CD4-positive, alpha-beta T cell (primary cell): ENCODE measurements at regions of chr4 and their contacts with region 1.

Region 1: GRCh38 chr4:163624727-163625126 is 130.2 kb downstream of the TMA16 start:
- DNase-seq: peak in 3 of 14 experiments; percentile 13 to 38 (median 14)
- ATAC-seq: peak; percentile 54
- H3K4me3 ChIP-seq: no peak overlapping the region
- H3K4me3 Mint-ChIP-seq: peak overlapping the region; percentile 69
- H3K27ac ChIP-seq: no peak overlapping the region
- H3K27ac Mint-ChIP-seq: peak overlapping the region; percentile 19
- H3K4me1 ChIP-seq: peaks cover 17% of the 10 kb centered on the region
- H3K4me1 Mint-ChIP-seq: peaks cover 48% of the 10 kb centered on the region
- H3K27me3 ChIP-seq: no peaks in the 10 kb centered on the region
- H3K27me3 Mint-ChIP-seq: no peaks in the 10 kb centered on the region
- CTCF ChIP-seq: no peak

Region 2: DNA sequence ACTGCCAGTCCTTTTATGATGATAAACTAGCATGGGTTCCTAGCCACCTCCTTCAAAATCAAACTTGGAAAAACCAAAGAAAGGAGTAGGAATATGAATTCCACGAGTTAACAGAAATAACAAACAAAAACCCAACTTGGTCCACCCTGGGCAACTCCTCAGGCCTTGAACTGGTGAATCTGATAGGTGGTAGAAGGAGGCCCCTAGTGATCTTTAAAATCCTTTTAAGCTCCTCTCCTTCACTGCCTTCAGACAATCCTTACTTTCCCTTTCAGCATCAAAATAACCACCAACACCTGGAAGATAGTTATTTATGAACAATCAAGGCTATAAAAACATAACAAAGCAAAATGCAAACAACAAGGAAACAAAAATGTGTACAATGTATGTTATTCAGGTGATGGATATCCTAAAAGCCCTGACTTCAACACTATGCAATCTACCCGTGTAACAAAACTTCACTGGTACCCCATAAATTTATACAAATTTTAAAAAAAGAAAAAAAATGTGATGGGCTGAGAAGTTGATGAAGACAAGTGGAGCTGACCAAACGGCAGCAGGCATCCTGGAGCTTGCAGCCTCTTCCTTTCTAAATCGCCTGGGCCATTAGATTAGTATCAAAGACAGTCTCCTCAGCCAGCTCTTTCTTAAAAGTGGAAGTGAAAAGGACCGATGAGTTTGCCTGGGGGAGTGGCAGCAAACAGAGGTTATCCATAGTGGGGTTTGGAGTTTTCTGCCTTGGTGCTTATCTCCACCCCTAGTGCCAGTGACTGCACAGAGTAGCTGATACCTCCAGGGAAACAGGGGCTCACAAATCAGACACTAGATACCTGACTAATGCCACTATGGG is 49.3 kb after region 1 on chr4:
- CTCF ChIA-PET with region 1: no interaction called
- POLR2A ChIA-PET with region 1: no interaction called
- intact Hi-C with region 1: loop called in 1 of 2 experiments (anchors 5 kb)
- DNase-seq: peak in 1 of 14 experiments; percentile 16
- ATAC-seq: no peak
- H3K4me3 ChIP-seq: no peak overlapping the region
- H3K4me3 Mint-ChIP-seq: no peak overlapping the region
- H3K27ac ChIP-seq: no peak overlapping the region
- H3K27ac Mint-ChIP-seq: no peak overlapping the region
- H3K4me1 ChIP-seq: no peaks in the 10 kb centered on the region
- H3K4me1 Mint-ChIP-seq: peaks cover 28% of the 10 kb centered on the region
- H3K27me3 ChIP-seq: no peaks in the 10 kb centered on the region
- H3K27me3 Mint-ChIP-seq: no peaks in the 10 kb centered on the region
- CTCF ChIP-seq: no peak